ENCODE measurements at regions of chr1 and their contacts with region 1.

Region 1: GRCh38 chr1:225962440-225962975 is 21.5 kb upstream of the LEFTY2 start:
- DNase-seq: peak; percentile 27
- ATAC-seq: peak; percentile 95
- H3K4me3 ChIP-seq: no peak overlapping the region
- H3K27ac ChIP-seq: no peak overlapping the region
- H3K4me1 ChIP-seq: peaks cover 19% of the 10 kb centered on the region
- H3K27me3 ChIP-seq: no peaks in the 10 kb centered on the region; a peak in 2 of 5 replicates
- CTCF ChIP-seq: peak; percentile 80
- EP300 ChIP-seq: no peak
- POLR2A ChIP-seq: no peak
- RAD21 ChIP-seq: peak; percentile 71

Region 2: GRCh38 chr1:225977937-225978748 is 15.6 kb after region 1 on chr1:
- CTCF ChIA-PET with region 1: interaction called, 3 read pairs
- POLR2A ChIA-PET with region 1: no interaction called
- in situ Hi-C with region 1: no loop called
- intact Hi-C with region 1: loop called (anchors 2 kb)
- DNase-seq: no peak
- ATAC-seq: no peak
- H3K4me3 ChIP-seq: no peak overlapping the region
- H3K27ac ChIP-seq: no peak overlapping the region
- H3K4me1 ChIP-seq: no peaks in the 10 kb centered on the region
- H3K27me3 ChIP-seq: no peaks in the 10 kb centered on the region
- CTCF ChIP-seq: no peak
- EP300 ChIP-seq: no peak
- POLR2A ChIP-seq: no peak
- RAD21 ChIP-seq: no peak

Region 3: GRCh38 chr1:225999227-225999911 is 36.9 kb after region 1 on chr1 and contains the start of gene SDE2:
- CTCF ChIA-PET with region 1: no interaction called
- POLR2A ChIA-PET with region 1: no interaction called
- in situ Hi-C with region 1: no loop called
- intact Hi-C with region 1: no loop called
- DNase-seq: peak; percentile 95
- ATAC-seq: peak; percentile 93
- H3K4me3 ChIP-seq: peak within 1 kb of the TSS; percentile 74 to 88 (median 86)
- H3K27ac ChIP-seq: peak within 1 kb of the TSS; percentile 76
- H3K4me1 ChIP-seq: peaks cover 66% of the 10 kb centered on the region
- H3K27me3 ChIP-seq: no peaks in the 10 kb centered on the region; a peak in 1 of 5 replicates
- CTCF ChIP-seq: no peak
- EP300 ChIP-seq: no peak
- POLR2A ChIP-seq: peak; percentile 94 to 99
- RAD21 ChIP-seq: no peak
- total RNA-seq, gene SDE2: 19.6 and 24.7 TPM in 2 replicates

Measured in HepG2 (cell line).